ENCODE measurements at regions of chr7 and their contacts with region 1.

Region 1: DNA sequence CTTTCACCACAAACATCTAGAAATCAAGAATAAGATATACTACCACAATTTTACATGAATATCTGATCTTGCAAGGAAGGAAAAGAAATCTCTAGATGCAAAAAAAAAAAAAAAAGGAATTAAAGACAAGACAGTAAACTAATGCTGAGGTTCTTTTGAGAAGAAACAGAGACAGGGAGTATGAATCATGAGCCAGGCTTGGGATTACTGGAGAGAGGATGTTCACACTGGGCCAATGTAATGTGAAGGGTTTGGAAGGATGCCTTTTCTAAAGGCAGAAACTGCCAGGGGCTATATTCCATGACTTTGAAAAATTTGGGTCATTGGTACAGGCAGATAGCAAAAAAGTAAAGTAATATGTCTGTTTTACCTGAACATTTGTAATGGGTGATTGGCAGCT is 573.0 kb upstream of the IGFBP3 start:
- DNase-seq: no peak
- H3K4me3 Mint-ChIP-seq: no peak overlapping the region
- H3K27ac Mint-ChIP-seq: peak overlapping the region; percentile 82
- H3K4me1 Mint-ChIP-seq: peaks cover 35% of the 10 kb centered on the region
- H3K27me3 Mint-ChIP-seq: no peaks in the 10 kb centered on the region
- CTCF ChIP-seq: no peak

Region 2: GRCh38 chr7:46229409-46229808 is 264.6 kb before region 1 on chr7:
- CTCF ChIA-PET with region 1: no interaction called
- intact Hi-C with region 1: no loop called
- DNase-seq: no peak
- H3K4me3 Mint-ChIP-seq: no peak overlapping the region
- H3K27ac Mint-ChIP-seq: no peak overlapping the region
- H3K4me1 Mint-ChIP-seq: peaks cover 28% of the 10 kb centered on the region
- H3K27me3 Mint-ChIP-seq: no peaks in the 10 kb centered on the region
- CTCF ChIP-seq: no peak

Region 3: GRCh38 chr7:46544374-46545008 is 50.5 kb after region 1 on chr7:
- CTCF ChIA-PET with region 1: interaction called, 3 read pairs
- intact Hi-C with region 1: loop called (anchors 2 kb)
- DNase-seq: no peak
- H3K4me3 Mint-ChIP-seq: no peak overlapping the region
- H3K27ac Mint-ChIP-seq: peak overlapping the region; percentile 70
- H3K4me1 Mint-ChIP-seq: peaks cover 53% of the 10 kb centered on the region
- H3K27me3 Mint-ChIP-seq: no peaks in the 10 kb centered on the region
- CTCF ChIP-seq: no peak

Region 4: GRCh38 chr7:46558482-46559193 is 64.6 kb after region 1 on chr7:
- CTCF ChIA-PET with region 1: no interaction called
- intact Hi-C with region 1: loop called (anchors 2 kb)
- DNase-seq: no peak
- H3K4me3 Mint-ChIP-seq: no peak overlapping the region
- H3K27ac Mint-ChIP-seq: peak overlapping the region; percentile 96
- H3K4me1 Mint-ChIP-seq: peaks cover 62% of the 10 kb centered on the region
- H3K27me3 Mint-ChIP-seq: no peaks in the 10 kb centered on the region
- CTCF ChIP-seq: no peak

Region 5: DNA sequence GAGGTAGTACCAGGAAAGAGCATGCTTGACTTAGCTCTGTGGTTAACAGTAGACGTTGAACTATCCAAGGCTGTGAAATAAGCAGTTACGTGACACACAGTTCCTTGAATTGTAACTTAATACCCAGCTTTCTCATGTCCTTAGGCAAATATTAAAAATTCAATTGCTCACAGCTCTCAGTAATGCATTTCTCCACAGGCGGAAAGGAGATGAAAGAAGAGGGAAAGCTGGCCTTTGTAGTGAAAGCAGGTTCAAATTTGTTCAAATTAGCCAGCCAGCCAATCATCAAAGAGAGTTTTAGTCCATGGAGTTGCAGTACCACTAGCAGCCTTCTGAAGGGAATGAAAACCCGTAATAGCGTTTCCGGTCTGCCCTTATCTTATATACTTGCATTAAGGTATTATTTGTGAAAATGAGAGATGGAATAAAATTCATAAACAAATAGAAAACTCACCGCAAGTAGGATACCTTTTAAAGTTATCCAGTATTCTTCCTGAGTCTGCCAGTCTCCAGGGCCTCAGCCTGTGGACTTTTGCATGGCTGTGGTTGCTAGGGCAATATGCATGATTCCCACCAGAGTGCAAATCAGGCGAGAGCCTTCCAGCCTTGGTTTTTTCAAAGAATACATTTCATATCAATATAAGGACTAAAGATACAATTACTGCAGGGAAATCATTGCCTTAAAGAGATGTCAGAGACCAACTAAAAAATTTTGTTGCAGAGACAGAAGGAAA is 292.4 kb after region 1 on chr7:
- CTCF ChIA-PET with region 1: no interaction called
- intact Hi-C with region 1: loop called (anchors 5 kb)
- DNase-seq: peak; percentile 69
- H3K4me3 Mint-ChIP-seq: peak overlapping the region; percentile 45
- H3K27ac Mint-ChIP-seq: peak overlapping the region; percentile 95
- H3K4me1 Mint-ChIP-seq: peaks cover 29% of the 10 kb centered on the region
- H3K27me3 Mint-ChIP-seq: no peaks in the 10 kb centered on the region
- CTCF ChIP-seq: no peak

Region 6: GRCh38 chr7:46932676-46933424 is 438.8 kb after region 1 on chr7:
- CTCF ChIA-PET with region 1: interaction called, 4 read pairs
- intact Hi-C with region 1: loop called (anchors 5 kb)
- DNase-seq: peak; percentile 41
- H3K4me3 Mint-ChIP-seq: peak overlapping the region; percentile 18
- H3K27ac Mint-ChIP-seq: peak overlapping the region; percentile 99
- H3K4me1 Mint-ChIP-seq: peaks cover 59% of the 10 kb centered on the region
- H3K27me3 Mint-ChIP-seq: no peaks in the 10 kb centered on the region
- CTCF ChIP-seq: no peak

Measured in Calu3 (cell line).